Activated CD4-positive, alpha-beta T cell treated with anti-CD3 and anti-CD28 coated beads for 36 hours (primary cell): ENCODE measurements at regions of chr10 and their contacts with region 1.

Region 1: GRCh38 chr10:95236068-95236903 is 42.2 kb downstream of the ACSM6 start:
- DNase-seq: peak; percentile 56
- ATAC-seq: peak; percentile 87
- H3K4me3 Mint-ChIP-seq: peak overlapping the region; percentile 19
- H3K27ac Mint-ChIP-seq: peak overlapping the region; percentile 85
- H3K4me1 Mint-ChIP-seq: peaks cover 29% of the 10 kb centered on the region
- H3K27me3 Mint-ChIP-seq: peaks cover 15% of the 10 kb centered on the region

Region 2: DNA sequence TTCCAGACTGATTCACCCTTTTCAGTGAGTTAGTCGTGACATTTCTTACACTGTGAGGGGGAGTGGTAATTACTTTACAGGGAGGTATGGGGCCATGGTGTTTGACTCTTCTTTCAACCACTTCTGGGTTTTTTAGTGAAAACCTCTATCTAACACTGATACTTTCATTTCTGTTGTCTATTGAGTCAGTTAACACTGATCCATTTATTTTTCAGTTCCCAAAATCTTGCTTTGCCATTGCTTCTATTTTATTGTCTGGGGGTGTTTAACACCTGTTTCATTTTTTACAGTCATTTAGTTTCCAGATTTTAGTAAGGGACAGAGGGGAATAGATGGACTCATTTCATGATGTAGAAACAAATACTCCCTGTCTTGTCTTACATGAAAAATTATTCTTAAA is 629.2 kb before region 1 on chr10:
- CTCF ChIA-PET with region 1: no interaction called
- POLR2A ChIA-PET with region 1: no interaction called
- intact Hi-C with region 1: loop called (anchors 1 to 5 kb)
- DNase-seq: no peak
- ATAC-seq: peak; percentile 93
- H3K4me3 Mint-ChIP-seq: no peak overlapping the region
- H3K27ac Mint-ChIP-seq: peak overlapping the region; percentile 72
- H3K4me1 Mint-ChIP-seq: peaks cover 24% of the 10 kb centered on the region
- H3K27me3 Mint-ChIP-seq: no peaks in the 10 kb centered on the region

Region 3: GRCh38 chr10:96339957-96340904 is 1103.9 kb after region 1 on chr10:
- CTCF ChIA-PET with region 1: no interaction called
- POLR2A ChIA-PET with region 1: no interaction called
- intact Hi-C with region 1: loop called in 1 of 2 experiments (anchors 10 kb)
- DNase-seq: peak; percentile 83
- ATAC-seq: peak; percentile 77
- H3K4me3 Mint-ChIP-seq: no peak overlapping the region
- H3K27ac Mint-ChIP-seq: no peak overlapping the region
- H3K4me1 Mint-ChIP-seq: peaks cover 9% of the 10 kb centered on the region
- H3K27me3 Mint-ChIP-seq: peaks cover 6% of the 10 kb centered on the region